Thyroid gland (tissue), 4 donors: ENCODE measurements at regions of chr4 and their contacts with region 1.

Region 1: DNA sequence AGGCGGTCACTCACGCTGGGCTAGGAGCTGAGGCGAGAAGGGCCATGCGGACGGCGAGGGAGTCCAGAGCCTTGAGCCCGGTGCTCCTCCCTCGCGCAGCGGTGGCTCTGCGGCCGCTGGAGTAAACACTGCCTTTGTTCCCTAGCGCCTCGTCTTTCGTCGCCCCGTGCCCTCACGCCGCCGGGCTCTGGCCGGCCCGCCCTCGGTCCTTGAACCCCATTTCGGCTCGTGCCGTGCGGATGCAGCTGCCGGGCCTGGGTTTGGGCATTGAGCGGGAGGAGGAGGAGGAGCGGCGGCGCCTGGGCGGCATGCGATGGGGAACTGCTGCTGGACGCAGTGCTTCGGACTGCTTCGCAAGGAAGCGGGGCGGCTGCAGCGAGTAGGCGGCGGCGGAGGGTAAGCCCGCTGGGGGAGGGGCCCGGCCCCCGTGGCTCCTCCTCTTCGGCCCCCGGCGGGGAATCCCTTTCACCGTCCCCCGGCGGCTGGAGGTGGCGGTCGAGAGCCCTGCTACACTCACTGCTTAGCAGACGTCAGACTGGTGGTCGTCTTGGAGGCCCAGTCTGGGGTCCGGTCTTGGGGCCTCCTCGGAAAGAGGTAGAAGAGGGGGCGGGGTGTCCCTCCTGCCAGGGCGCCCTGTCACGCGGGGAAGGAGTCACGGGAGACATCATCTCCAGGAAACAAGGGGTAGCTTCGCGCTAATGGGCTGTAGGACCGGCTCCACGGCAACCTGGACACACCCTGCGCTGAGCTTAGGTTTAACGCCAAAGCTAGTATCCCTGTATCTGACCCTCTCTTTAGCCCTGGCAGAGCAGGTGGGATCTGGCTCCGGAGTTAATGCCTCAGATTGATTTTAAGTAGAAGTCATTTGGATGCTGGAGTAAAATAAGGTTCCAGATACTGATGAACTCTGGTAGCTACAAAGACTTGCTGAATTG is at the start of gene AP1AR:
- DNase-seq: peak; percentile 81 to 82
- H3K4me3 ChIP-seq: peak within 1 kb of the TSS; percentile 91 to 97 (median 92)
- H3K27ac ChIP-seq: peak within 1 kb of the TSS; percentile 90 to 98 (median 95)
- H3K4me1 ChIP-seq: peaks cover 5 to 11% of the 10 kb centered on the region in 2 donors
- H3K27me3 ChIP-seq: no peaks in the 10 kb centered on the region
- CTCF ChIP-seq: peak in 4 of 6 experiments; percentile 19 to 34 (median 28)
- POLR2A ChIP-seq: peak in 1 of 2 donors; percentile 94
- total RNA-seq, gene AP1AR: 15.0 to 20.4 (median 16.6) TPM

Region 2: GRCh38 chr4:112099701-112100297 is 132.2 kb before region 1 on chr4:
- intact Hi-C with region 1: loop called (anchors 5 kb)
- DNase-seq: no peak
- H3K4me3 ChIP-seq: no peak overlapping the region
- H3K27ac ChIP-seq: no peak overlapping the region
- H3K4me1 ChIP-seq: no peaks in the 10 kb centered on the region
- H3K27me3 ChIP-seq: no peaks in the 10 kb centered on the region
- CTCF ChIP-seq: peak in 4 of 6 experiments; percentile 35 to 69 (median 61)
- POLR2A ChIP-seq: no peak

Region 3: DNA sequence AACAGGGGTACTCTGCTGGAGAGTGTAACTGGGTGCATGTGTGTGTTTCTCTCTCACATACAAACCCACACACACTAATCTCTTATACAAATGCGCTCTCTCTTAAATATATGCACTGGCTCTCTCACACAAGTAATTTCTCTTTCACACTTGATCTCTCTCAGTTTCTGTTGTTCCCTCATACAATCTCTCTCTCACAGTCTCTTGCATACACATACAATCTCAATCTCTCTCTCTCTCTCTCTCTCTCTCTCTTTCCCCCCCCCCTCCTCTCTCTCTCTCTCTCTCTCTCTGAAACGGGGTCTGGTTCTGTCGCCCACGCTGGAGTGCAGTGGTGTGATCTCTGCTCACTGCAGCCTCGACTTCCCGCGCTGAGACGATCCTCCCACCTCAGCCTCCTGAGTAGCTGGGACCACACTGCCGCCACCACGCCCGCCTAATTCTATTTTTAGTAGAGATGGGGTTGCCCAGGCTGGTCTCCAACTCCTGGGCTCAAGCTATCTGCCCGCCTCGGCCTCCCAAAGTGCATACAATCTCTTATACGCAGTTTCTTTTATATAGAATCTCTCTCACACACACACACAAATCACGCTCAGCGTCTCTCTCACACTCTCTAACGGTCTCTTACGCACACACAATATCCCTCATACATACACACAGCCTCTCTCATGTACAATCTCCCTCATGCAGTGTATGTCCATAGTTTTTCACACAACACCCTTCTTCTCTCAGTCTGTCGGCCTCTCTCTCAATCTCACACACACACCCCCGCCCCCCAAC is 87.3 kb before region 1 on chr4:
- intact Hi-C with region 1: loop called (anchors 5 kb)
- DNase-seq: peak in 1 of 2 donors; percentile 15
- H3K4me3 ChIP-seq: no peak overlapping the region
- H3K27ac ChIP-seq: peak overlapping the region in 2 of 3 donors; percentile 87 to 89
- H3K4me1 ChIP-seq: peaks cover 0 to 7% of the 10 kb centered on the region in 2 donors
- H3K27me3 ChIP-seq: no peaks in the 10 kb centered on the region
- CTCF ChIP-seq: no peak
- POLR2A ChIP-seq: no peak

Region 4: DNA sequence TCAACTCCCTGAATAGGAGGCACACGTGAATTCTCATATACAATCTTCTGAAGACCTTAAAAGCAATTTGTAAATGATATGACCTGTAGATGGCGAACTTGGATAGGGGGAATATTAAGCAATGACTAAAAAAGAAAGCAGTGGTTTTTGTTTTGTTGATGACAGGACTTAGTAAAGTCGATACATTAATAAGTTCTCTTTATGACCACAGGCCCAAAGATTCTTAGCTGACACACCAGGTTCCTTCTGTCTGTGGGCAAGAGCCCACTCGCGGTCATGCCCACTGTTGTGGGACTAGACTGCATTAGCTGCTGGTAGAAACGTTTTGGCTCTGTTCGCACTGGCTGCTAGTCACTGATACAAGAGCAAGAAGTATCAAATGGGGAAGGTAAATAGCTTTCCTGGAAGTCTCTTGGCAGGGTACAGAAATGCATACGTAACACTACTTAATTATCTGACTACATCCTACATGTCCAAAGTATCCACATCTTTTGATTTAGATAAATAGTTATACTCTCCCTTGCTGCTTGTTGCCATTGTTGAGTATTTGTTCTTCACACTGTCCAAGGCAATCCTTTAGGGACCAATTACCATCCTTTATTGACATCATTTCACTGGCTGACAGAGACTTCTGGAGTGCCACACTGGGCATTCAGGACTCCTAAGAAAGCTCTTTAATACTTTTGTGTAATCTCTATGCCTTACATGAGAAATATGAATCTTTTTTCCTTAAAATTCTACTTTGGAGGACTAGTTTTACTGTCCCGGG is 96.1 kb after region 1 on chr4:
- intact Hi-C with region 1: no loop called
- DNase-seq: no peak
- H3K4me3 ChIP-seq: no peak overlapping the region
- H3K27ac ChIP-seq: no peak overlapping the region
- H3K4me1 ChIP-seq: no peaks in the 10 kb centered on the region
- H3K27me3 ChIP-seq: no peaks in the 10 kb centered on the region
- CTCF ChIP-seq: peak in 5 of 6 experiments; percentile 8 to 64 (median 51)
- POLR2A ChIP-seq: no peak

Region 5: DNA sequence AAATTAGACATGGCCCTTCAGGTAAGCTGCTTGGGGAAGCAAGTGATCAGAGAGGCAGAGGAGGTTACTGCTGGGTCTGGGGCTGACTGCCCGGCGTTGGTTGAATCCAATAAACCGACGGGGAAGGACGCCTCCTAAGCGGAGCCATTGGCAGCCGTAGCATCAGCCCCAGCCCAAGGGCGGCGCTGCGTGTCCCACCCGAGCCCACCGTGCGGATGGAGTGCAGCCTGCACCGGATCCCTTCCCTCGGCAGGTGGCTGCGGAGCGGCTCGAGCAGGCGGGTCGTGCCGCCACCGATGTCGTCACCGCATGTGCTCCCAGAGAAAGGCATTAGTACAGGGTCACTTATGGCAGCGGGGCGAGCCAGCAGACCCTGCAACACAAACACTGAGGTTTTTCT is 147.3 kb after region 1 on chr4:
- intact Hi-C with region 1: no loop called
- DNase-seq: no peak
- H3K4me3 ChIP-seq: no peak overlapping the region
- H3K27ac ChIP-seq: no peak overlapping the region
- H3K4me1 ChIP-seq: peaks cover 18% of the 10 kb centered on the region in 2 donors
- H3K27me3 ChIP-seq: no peaks in the 10 kb centered on the region
- CTCF ChIP-seq: no peak
- POLR2A ChIP-seq: no peak